ENCODE measurements at regions of chr10 and their contacts with region 1.

Region 1: GRCh38 chr10:6202684-6203330 is at the start of gene PFKFB3:
- DNase-seq: peak; percentile 96 to 99 (median 97)
- ATAC-seq: peak; percentile 95
- H3K4me3 ChIP-seq: peak within 1 kb of the TSS; percentile 66 to 89 (median 78)
- H3K27ac ChIP-seq: peak within 1 kb of the TSS; percentile 61 to 99 (median 94)
- H3K4me1 ChIP-seq: peaks cover 0 to 59% (median 30%) of the 10 kb centered on the region in 12 donors
- H3K27me3 ChIP-seq: no peaks in the 10 kb centered on the region
- CTCF ChIP-seq: peak in 11 of 12 donors; percentile 96 to 99 (median 98)
- POLR2A ChIP-seq: peak; percentile 89 to 99
- total RNA-seq, gene PFKFB3: 8.4 to 53.1 (median 15.1) TPM

Region 2: DNA sequence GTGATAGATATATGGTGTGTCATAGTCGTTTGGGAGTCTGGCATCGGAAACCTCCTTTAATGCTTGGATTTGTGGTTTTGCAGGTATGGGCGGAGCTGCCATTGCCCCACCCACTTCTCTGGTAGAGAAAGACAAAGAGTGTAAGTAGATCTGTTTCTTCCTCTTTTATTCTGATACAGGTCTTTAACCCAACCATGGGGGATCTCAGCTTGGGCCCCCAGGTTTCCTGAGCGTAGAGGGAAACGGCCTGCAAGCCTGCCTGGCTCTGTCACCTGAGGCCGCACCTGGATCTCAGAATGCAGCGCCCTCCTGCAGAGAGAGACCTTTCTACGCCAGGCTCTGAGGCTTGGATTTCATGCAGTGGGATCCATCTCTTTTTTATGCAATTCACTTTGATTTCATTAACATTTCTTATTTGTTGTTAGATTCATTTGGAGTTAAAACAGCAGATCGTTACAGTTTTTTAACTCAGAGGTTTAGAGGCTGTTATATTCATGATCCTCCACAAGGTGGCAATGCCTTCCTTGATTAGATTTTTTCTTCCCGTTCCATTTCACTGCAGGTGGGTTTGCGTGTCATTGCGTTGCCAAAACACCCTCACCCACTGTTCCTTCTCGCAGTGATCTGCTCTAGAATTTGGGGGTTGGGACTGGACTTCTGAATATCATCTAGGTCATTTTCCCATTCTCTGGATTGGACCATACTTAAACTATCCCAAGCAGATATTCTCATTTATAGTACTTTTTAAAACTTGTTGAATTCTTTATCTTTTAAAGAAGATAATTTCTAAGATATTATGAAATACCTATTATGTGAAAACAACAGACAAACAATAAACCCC is 94.0 kb before region 1 on chr10:
- intact Hi-C with region 1: loop called in 9 of 10 experiments (anchors 2 to 10 kb)
- DNase-seq: no peak
- ATAC-seq: peak in 2 of 4 donors; percentile 29 to 45
- H3K4me3 ChIP-seq: no peak overlapping the region
- H3K27ac ChIP-seq: no peak overlapping the region
- H3K4me1 ChIP-seq: peaks cover 0 to 24% (median 0%) of the 10 kb centered on the region in 12 donors
- H3K27me3 ChIP-seq: no peaks in the 10 kb centered on the region
- CTCF ChIP-seq: peak; percentile 58 to 81 (median 74)
- POLR2A ChIP-seq: no peak

Region 3: GRCh38 chr10:6114805-6115341 is 87.9 kb before region 1 on chr10:
- intact Hi-C with region 1: loop called in 4 of 10 experiments (anchors 5 kb)
- DNase-seq: peak in 1 of 5 donors; percentile 48
- ATAC-seq: peak; percentile 40 to 62 (median 50)
- H3K4me3 ChIP-seq: no peak overlapping the region
- H3K27ac ChIP-seq: peak overlapping the region in 11 of 12 donors; percentile 17 to 71 (median 57)
- H3K4me1 ChIP-seq: peaks cover 0 to 42% (median 13%) of the 10 kb centered on the region in 12 donors
- H3K27me3 ChIP-seq: no peaks in the 10 kb centered on the region
- CTCF ChIP-seq: peak in 1 of 12 donors; percentile 5
- POLR2A ChIP-seq: no peak

Region 4: GRCh38 chr10:6144406-6145165 is 58.2 kb before region 1 on chr10:
- intact Hi-C with region 1: loop called in 1 of 10 experiments (anchors 1 kb)
- DNase-seq: peak; percentile 92 to 96 (median 94)
- ATAC-seq: peak; percentile 68 to 97 (median 94)
- H3K4me3 ChIP-seq: peak overlapping the region; percentile 54 to 97 (median 88)
- H3K27ac ChIP-seq: peak overlapping the region in 11 of 12 donors; percentile 77 to 94 (median 89)
- H3K4me1 ChIP-seq: peaks cover 0 to 67% (median 12%) of the 10 kb centered on the region in 12 donors
- H3K27me3 ChIP-seq: no peaks in the 10 kb centered on the region
- CTCF ChIP-seq: peak in 3 of 12 donors; percentile 11 to 40 (median 35)
- POLR2A ChIP-seq: peak in 1 of 2 donors; percentile 91

Region 5: DNA sequence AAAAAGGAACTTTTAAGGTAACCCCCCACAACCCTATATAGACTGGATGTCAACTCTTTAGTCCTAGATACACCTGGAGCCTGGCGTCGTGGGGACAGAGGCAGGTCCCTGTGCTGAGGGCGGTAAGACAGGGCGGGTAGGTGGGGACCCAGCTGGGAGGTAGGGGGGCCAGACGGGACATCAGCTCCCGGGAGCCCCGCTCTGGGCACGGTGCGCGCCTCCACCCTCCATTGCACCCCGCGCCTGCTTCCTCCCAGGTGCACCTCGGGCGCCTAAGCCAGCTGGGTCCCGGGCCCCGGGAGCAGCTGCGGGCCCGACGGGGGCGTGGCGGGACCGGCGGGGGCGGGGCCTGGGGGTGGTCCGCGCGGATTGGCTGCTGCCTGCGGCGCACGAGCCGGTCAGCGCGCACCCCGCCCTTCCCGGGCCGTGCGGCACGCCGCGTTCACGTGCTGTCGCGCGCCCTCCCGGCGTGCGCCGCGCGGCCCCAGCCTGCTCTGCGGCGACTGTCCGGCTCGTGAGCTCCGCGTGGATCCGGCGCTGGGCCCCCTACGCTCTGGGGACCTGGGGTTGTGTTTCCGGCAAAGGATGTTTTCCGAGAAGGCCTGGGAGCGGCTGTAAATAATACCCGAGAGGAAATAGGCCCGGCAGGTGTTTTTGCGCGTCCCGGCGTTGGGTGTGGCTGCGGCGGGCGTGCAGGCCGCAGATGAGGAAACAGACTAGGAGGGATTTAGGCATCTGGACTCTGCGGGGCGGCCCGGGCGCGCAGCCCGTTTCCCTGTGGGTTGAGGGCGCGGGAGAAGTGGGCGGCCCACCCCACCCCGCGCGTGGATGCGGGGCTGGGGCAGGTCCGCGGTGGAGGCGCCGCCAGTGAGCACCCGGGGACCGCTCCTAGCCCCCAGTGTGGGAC is 39.2 kb before region 1 on chr10:
- intact Hi-C with region 1: loop called in 9 of 10 experiments (anchors 2 to 5 kb)
- DNase-seq: peak; percentile 92 to 95 (median 94)
- ATAC-seq: peak; percentile 97 to 100 (median 98)
- H3K4me3 ChIP-seq: peak overlapping the region; percentile 55 to 93 (median 78)
- H3K27ac ChIP-seq: peak overlapping the region; percentile 83 to 99 (median 94)
- H3K4me1 ChIP-seq: peaks cover 4 to 44% (median 24%) of the 10 kb centered on the region in 12 donors
- H3K27me3 ChIP-seq: no peaks in the 10 kb centered on the region
- CTCF ChIP-seq: no peak
- POLR2A ChIP-seq: peak in 1 of 2 donors; percentile 58

Region 6: GRCh38 chr10:6254201-6254600 is 51.4 kb after region 1 on chr10:
- intact Hi-C with region 1: no loop called
- DNase-seq: no peak
- ATAC-seq: no peak
- H3K4me3 ChIP-seq: no peak overlapping the region
- H3K27ac ChIP-seq: no peak overlapping the region
- H3K4me1 ChIP-seq: no peaks in the 10 kb centered on the region
- H3K27me3 ChIP-seq: no peaks in the 10 kb centered on the region
- CTCF ChIP-seq: no peak
- POLR2A ChIP-seq: no peak